Vagina (tissue), 2 donors: ENCODE measurements at regions of chr16 and their contacts with region 1.

Region 1: GRCh38 chr16:82263521-82264143 is 93.6 kb upstream of the MPHOSPH6 start:
- DNase-seq: no peak
- H3K4me3 ChIP-seq: no peak overlapping the region
- H3K27ac ChIP-seq: no peak overlapping the region
- H3K4me1 ChIP-seq: no peaks in the 10 kb centered on the region
- H3K27me3 ChIP-seq: no peaks in the 10 kb centered on the region
- CTCF ChIP-seq: peak; percentile 62 to 95 (median 66)
- POLR2A ChIP-seq: no peak

Region 2: GRCh38 chr16:82177555-82178056 is 86.0 kb before region 1 on chr16:
- intact Hi-C with region 1: no loop called
- DNase-seq: no peak
- H3K4me3 ChIP-seq: no peak overlapping the region
- H3K27ac ChIP-seq: no peak overlapping the region
- H3K4me1 ChIP-seq: no peaks in the 10 kb centered on the region
- H3K27me3 ChIP-seq: no peaks in the 10 kb centered on the region
- CTCF ChIP-seq: no peak
- POLR2A ChIP-seq: no peak

Region 3: GRCh38 chr16:82311528-82311927 is 47.9 kb after region 1 on chr16:
- intact Hi-C with region 1: no loop called
- DNase-seq: no peak
- H3K4me3 ChIP-seq: no peak overlapping the region
- H3K27ac ChIP-seq: no peak overlapping the region
- H3K4me1 ChIP-seq: no peaks in the 10 kb centered on the region
- H3K27me3 ChIP-seq: no peaks in the 10 kb centered on the region
- CTCF ChIP-seq: no peak
- POLR2A ChIP-seq: no peak

Region 4: GRCh38 chr16:83898463-83899271 is 1635.0 kb after region 1 on chr16 and contains the start of gene MLYCD:
- intact Hi-C with region 1: loop called (anchors 10 kb)
- DNase-seq: peak in 1 of 2 donors; percentile 90
- H3K4me3 ChIP-seq: peak within 1 kb of the TSS; percentile 73 to 99
- H3K27ac ChIP-seq: peak within 1 kb of the TSS; percentile 84
- H3K4me1 ChIP-seq: peaks cover 36% of the 10 kb centered on the region
- H3K27me3 ChIP-seq: no peaks in the 10 kb centered on the region
- CTCF ChIP-seq: no peak
- POLR2A ChIP-seq: peak in 1 of 2 donors; percentile 46
- total RNA-seq, gene MLYCD: 8.8 TPM